ENCODE measurements at regions of chrX and their contacts with region 1.

Region 1: DNA sequence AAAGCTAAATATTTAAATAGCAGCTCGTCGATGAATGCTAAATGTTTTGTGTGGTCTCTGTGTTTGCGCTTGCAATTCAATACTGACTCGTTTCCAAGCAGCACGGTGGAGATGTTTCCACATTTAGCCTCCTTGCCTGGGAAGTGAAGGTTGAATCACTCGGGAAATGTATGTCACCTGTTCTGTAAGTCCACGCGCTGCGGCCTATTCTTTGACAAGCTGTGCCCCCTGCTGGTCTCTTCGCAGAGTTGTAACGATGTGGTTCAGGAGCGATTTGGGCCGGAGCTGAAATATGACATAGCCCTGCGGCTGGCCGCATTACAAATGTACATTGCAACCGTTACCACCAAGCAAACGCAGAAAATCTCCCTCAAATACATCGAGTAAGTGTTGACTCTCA is 89.6 kb upstream of the PRPS2 start:
- DNase-seq: peak; percentile 62
- ATAC-seq: peak; percentile 91
- H3K4me3 ChIP-seq: no peak overlapping the region
- H3K27ac ChIP-seq: no peak overlapping the region
- H3K4me1 ChIP-seq: no peaks in the 10 kb centered on the region
- H3K27me3 ChIP-seq: 0 out of 2 replicates have a peak, but pooled peaks cover 3% of the 10 kb centered on the region
- CTCF ChIP-seq: peak; percentile 42 to 58 (median 52); a peak in 5 of 6 replicates
- POLR2A ChIP-seq: no peak
- RAD21 ChIP-seq: peak; percentile 69

Region 2: GRCh38 chrX:11787564-11787963 is 914.1 kb before region 1 on chrX:
- CTCF ChIA-PET with region 1: no interaction called
- POLR2A ChIA-PET with region 1: no interaction called
- RAD21 ChIA-PET with region 1: no interaction called
- intact Hi-C with region 1: loop called (anchors 2 kb)
- DNase-seq: peak; percentile 10
- ATAC-seq: peak; percentile 75
- H3K4me3 ChIP-seq: no peak overlapping the region
- H3K27ac ChIP-seq: no peak overlapping the region
- H3K4me1 ChIP-seq: no peaks in the 10 kb centered on the region
- H3K27me3 ChIP-seq: no peaks in the 10 kb centered on the region
- CTCF ChIP-seq: peak; percentile 29 to 53 (median 49); a peak in 4 of 6 replicates
- POLR2A ChIP-seq: no peak
- RAD21 ChIP-seq: peak; percentile 23; the same call in 1 of the 2 replicates

Region 3: DNA sequence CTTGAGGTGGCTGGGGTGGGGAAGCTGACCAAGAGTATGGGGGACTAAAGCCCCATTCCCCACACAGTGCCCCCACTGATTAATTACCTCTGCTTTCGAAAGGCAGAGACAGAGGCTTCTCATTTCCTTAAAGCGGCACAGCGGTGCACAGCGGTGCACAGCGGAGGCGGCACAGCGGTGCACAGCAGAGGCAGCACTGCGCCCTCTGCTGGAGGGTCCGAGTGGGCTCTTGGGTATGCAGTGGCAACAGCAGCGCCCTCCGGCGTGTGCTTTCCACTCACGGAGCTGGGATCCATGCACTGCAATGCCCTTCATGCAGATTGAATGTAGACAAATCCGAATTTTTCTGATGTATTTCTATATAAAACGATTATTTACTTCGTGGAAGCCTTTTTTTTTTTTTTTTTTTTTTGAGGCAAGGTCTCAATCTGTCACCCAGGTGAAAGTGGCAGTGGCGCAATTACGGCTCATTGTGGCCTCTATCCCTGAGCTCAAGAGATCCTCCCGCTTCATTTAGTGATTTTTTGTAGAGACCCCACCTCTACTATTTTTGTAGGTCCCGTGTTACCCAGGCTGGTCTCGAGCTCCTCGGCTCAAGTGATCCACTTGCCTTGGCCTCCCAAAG is 69.9 kb after region 1 on chrX:
- CTCF ChIA-PET with region 1: interaction called, 16 read pairs
- POLR2A ChIA-PET with region 1: no interaction called
- RAD21 ChIA-PET with region 1: no interaction called
- intact Hi-C with region 1: loop called (anchors 2 kb)
- DNase-seq: peak; percentile 44
- ATAC-seq: peak; percentile 99
- H3K4me3 ChIP-seq: peak overlapping the region in 1 of 2 experiments; percentile 28; a peak in 1 of 4 replicates
- H3K27ac ChIP-seq: no peak overlapping the region
- H3K4me1 ChIP-seq: peaks cover 0 to 3% of the 10 kb centered on the region in 2 experiments; a peak in 1 of 4 replicates
- H3K27me3 ChIP-seq: no peaks in the 10 kb centered on the region
- CTCF ChIP-seq: peak; percentile 76 to 98 (median 79)
- POLR2A ChIP-seq: no peak
- RAD21 ChIP-seq: peak; percentile 51; the same call in 1 of the 2 replicates

Region 4: GRCh38 chrX:12901486-12901885 is 199.9 kb after region 1 on chrX:
- CTCF ChIA-PET with region 1: interaction called, 3 read pairs
- POLR2A ChIA-PET with region 1: no interaction called
- RAD21 ChIA-PET with region 1: no interaction called
- intact Hi-C with region 1: loop called (anchors 5 kb)
- DNase-seq: peak; percentile 36
- ATAC-seq: peak; percentile 83
- H3K4me3 ChIP-seq: no peak overlapping the region
- H3K27ac ChIP-seq: no peak overlapping the region
- H3K4me1 ChIP-seq: no peaks in the 10 kb centered on the region
- H3K27me3 ChIP-seq: no peaks in the 10 kb centered on the region
- CTCF ChIP-seq: peak; percentile 39 to 49 (median 44); a peak in 4 of 6 replicates
- POLR2A ChIP-seq: no peak
- RAD21 ChIP-seq: peak; percentile 57

Measured in HCT116 (cell line).